ENCODE measurements at regions of chr11 and their contacts with region 1.

Region 1: GRCh38 chr11:42311514-42311913 is 852.1 kb upstream of the LRRC4C start:
- DNase-seq: peak; percentile 96
- H3K4me3 ChIP-seq: no peak overlapping the region
- H3K27ac ChIP-seq: peak overlapping the region; percentile 60
- H3K4me1 ChIP-seq: peaks cover 30% of the 10 kb centered on the region
- H3K27me3 ChIP-seq: no peaks in the 10 kb centered on the region
- CTCF ChIP-seq: peak in 1 of 2 donors; percentile 20
- POLR2A ChIP-seq: peak; percentile 46

Region 2: GRCh38 chr11:42249401-42249800 is 62.1 kb before region 1 on chr11:
- CTCF ChIA-PET with region 1: no interaction called
- POLR2A ChIA-PET with region 1: no interaction called
- dilution Hi-C with region 1: no loop called
- intact Hi-C with region 1: loop called (anchors 5 kb)
- DNase-seq: peak; percentile 56
- H3K4me3 ChIP-seq: peak overlapping the region in 1 of 3 experiments; percentile 7
- H3K27ac ChIP-seq: peak overlapping the region; percentile 50
- H3K4me1 ChIP-seq: peaks cover 10% of the 10 kb centered on the region
- H3K27me3 ChIP-seq: no peaks in the 10 kb centered on the region
- CTCF ChIP-seq: no peak
- POLR2A ChIP-seq: no peak

Region 3: GRCh38 chr11:42498971-42499370 is 187.5 kb after region 1 on chr11:
- CTCF ChIA-PET with region 1: no interaction called
- POLR2A ChIA-PET with region 1: no interaction called
- dilution Hi-C with region 1: no loop called
- intact Hi-C with region 1: loop called (anchors 5 kb)
- DNase-seq: peak; percentile 53
- H3K4me3 ChIP-seq: no peak overlapping the region
- H3K27ac ChIP-seq: no peak overlapping the region
- H3K4me1 ChIP-seq: peaks cover 18% of the 10 kb centered on the region
- H3K27me3 ChIP-seq: no peaks in the 10 kb centered on the region
- CTCF ChIP-seq: no peak
- POLR2A ChIP-seq: no peak

Measured in endothelial cell of umbilical vein (primary cell).